Endothelial cell of umbilical vein (primary cell): ENCODE measurements at regions of chr14 and their contacts with region 1.

Region 1: DNA sequence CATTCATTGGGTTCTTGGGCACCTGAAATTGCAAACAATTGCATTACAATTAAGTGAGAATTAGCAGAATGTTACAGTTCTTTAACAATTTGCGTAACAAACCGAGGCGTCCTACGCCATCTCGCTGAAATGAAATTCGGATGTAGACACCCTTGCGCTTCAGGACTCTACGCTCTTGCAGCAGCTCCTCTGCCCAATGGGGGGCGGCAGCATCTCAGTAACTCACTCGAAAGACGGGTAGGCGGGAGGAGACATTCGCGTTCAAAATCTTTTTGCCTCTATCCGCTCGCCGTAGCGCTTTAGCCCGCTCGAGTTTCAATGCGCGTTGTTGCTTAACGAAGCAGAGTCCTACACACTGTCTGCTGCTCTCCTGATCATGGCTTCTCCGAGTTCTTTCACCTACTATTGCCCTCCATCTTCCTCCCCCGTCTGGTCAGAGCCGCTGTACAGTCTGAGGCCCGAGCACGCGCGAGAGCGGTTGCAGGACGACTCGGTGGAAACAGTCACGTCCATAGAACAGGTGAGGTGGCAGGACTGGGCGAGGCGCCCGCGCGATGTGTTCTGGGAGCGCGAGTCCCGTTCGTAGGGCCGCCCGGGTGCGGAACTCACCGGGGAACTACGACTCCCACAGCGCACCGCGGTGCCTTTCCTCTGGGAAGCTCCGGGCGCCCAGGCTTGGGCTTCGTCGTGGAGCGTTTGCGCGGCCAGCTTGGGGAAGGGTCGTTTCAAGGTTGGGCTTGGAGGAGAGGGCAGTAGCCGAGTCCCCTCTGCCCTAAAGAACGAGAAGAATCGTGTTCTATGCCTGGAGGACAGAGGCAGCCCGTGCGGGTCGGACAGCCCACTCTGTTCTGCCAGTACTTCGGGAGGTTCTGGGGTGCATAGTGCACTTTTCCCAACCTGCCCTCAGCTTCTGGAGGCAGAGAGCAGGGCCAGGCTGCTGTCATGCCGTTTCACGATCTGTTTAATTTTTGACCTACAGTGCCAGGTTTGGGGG is at the start of gene FNTB:
- DNase-seq: peak; percentile 98
- H3K4me3 ChIP-seq: peak within 1 kb of the TSS; percentile 40 to 76 (median 63)
- H3K27ac ChIP-seq: peak within 1 kb of the TSS; percentile 32
- H3K4me1 ChIP-seq: peaks cover 15% of the 10 kb centered on the region
- H3K27me3 ChIP-seq: peaks cover 6 to 20% of the 10 kb centered on the region in 2 experiments
- CTCF ChIP-seq: peak; percentile 69 to 85
- POLR2A ChIP-seq: peak; percentile 43
- total RNA-seq, gene FNTB: 21.0 and 24.5 TPM in 2 replicates

Region 2: GRCh38 chr14:64800000-64800399 is 186.9 kb before region 1 on chr14:
- CTCF ChIA-PET with region 1: interaction called, 3 read pairs
- POLR2A ChIA-PET with region 1: no interaction called
- dilution Hi-C with region 1: no loop called
- intact Hi-C with region 1: loop called (anchors 5 kb)
- DNase-seq: peak; percentile 38
- H3K4me3 ChIP-seq: no peak overlapping the region
- H3K27ac ChIP-seq: no peak overlapping the region
- H3K4me1 ChIP-seq: no peaks in the 10 kb centered on the region
- H3K27me3 ChIP-seq: peaks cover 0 to 4% of the 10 kb centered on the region in 2 experiments
- CTCF ChIP-seq: peak; percentile 47 to 61
- POLR2A ChIP-seq: no peak

Region 3: GRCh38 chr14:64914237-64914971 is 72.5 kb before region 1 on chr14 and contains the start of gene CHURC1:
- CTCF ChIA-PET with region 1: interaction called, 9 read pairs
- POLR2A ChIA-PET with region 1: no interaction called
- dilution Hi-C with region 1: no loop called
- intact Hi-C with region 1: loop called (anchors 1 kb)
- DNase-seq: peak; percentile 98
- H3K4me3 ChIP-seq: peak within 1 kb of the TSS; percentile 80 to 96 (median 94)
- H3K27ac ChIP-seq: peak within 1 kb of the TSS; percentile 81
- H3K4me1 ChIP-seq: peaks cover 16% of the 10 kb centered on the region
- H3K27me3 ChIP-seq: peaks cover 8 to 13% of the 10 kb centered on the region in 2 experiments
- CTCF ChIP-seq: no peak
- POLR2A ChIP-seq: peak; percentile 95
- total RNA-seq, gene CHURC1: 44.0 and 44.4 TPM in 2 replicates

Region 4: DNA sequence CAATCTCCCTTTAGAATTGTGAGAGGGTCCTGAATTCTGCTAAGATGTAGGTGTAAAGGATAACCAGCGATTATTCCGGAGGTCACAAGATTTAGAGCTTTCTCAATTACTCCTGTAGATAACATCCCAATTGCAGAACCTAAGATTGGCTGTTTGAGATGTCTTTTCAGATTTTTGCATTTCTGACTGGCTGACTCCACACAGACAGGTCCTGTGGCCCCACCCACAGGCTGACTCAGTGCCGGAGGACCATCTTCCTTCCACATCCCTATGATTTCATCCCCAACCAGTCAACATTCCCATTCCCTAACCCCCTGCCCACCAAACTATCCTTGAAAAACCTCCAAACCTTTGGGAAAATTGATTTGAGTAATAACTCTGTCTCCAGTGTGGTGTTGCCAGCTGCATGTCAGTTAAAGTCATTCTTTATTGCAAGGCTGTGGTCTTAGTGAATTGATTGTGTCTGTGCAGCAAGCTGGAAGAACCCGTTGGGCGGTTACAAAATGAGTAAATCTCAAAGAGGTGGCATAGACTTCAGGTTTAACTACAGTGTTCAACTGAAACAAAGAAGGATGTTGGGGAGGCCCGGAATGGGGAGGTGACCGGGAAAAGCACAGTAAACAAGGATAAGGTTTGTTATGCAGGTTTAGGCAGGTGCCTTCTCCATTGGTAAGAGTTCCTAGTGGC is 10.4 kb after region 1 on chr14:
- CTCF ChIA-PET with region 1: interaction called, 32 read pairs
- POLR2A ChIA-PET with region 1: no interaction called
- dilution Hi-C with region 1: no loop called
- intact Hi-C with region 1: no loop called
- DNase-seq: no peak
- H3K4me3 ChIP-seq: no peak overlapping the region
- H3K27ac ChIP-seq: no peak overlapping the region
- H3K4me1 ChIP-seq: peaks cover 4% of the 10 kb centered on the region
- H3K27me3 ChIP-seq: no peaks in the 10 kb centered on the region
- CTCF ChIP-seq: no peak
- POLR2A ChIP-seq: no peak

Region 5: GRCh38 chr14:65102441-65103149 is 115.7 kb after region 1 on chr14 and contains the start of gene MAX:
- CTCF ChIA-PET with region 1: interaction called, 5 read pairs
- POLR2A ChIA-PET with region 1: no interaction called
- dilution Hi-C with region 1: no loop called
- intact Hi-C with region 1: loop called (anchors 2 kb)
- DNase-seq: peak; percentile 99
- H3K4me3 ChIP-seq: peak within 1 kb of the TSS; percentile 87 to 93 (median 91)
- H3K27ac ChIP-seq: peak within 1 kb of the TSS; percentile 74
- H3K4me1 ChIP-seq: peaks cover 35% of the 10 kb centered on the region
- H3K27me3 ChIP-seq: no peaks in the 10 kb centered on the region
- CTCF ChIP-seq: no peak
- POLR2A ChIP-seq: peak; percentile 65
- total RNA-seq, gene MAX: 79.5 and 84.6 TPM in 2 replicates